ENCODE measurements at regions of chr1 and their contacts with region 1.

Region 1: DNA sequence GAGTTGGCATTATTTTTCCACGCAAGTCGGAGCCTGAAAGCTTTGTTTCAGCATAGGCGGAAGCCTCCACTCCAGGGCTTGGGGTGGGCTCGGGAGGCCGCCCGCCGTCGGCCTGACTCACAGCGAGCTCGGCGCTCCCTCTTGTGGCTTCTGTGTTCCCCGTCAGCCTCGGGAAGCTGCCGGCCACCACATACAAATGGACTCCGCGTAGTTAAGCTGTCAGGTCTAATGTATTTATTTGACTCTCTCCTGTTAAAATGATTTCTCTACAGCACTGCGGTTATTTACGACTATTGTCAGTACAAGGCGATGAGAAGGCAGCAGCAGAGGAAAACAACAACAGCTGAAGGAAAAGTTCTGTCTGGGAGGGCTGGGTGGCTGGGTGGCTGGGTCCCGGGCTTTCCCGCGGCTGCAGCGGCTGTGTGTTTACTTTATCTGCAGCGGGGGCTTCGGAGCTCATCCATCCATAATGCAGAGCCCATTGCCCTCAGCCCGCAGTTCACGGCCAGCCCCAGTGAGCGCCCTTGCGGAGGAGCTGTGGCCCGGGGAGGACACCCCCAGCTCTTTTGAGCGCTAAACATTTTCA is 375.7 kb upstream of the CAMK1G start:
- DNase-seq: peak; percentile 74
- ATAC-seq: peak; percentile 96

Region 2: GRCh38 chr1:209565759-209566678 is 358.2 kb after region 1 on chr1:
- intact Hi-C with region 1: loop called (anchors 10 kb)
- DNase-seq: peak; percentile 80
- ATAC-seq: peak; percentile 87

Measured in Right ventricle myocardium superior (tissue), 1 donor.